ENCODE measurements at regions of chr6 and their contacts with region 1.

Region 1: GRCh38 chr6:41072676-41073623 is at the start of gene NFYA:
- DNase-seq: peak; percentile 99
- H3K4me3 ChIP-seq: peak within 1 kb of the TSS; percentile 88
- CTCF ChIP-seq: peak; percentile 36

Region 2: DNA sequence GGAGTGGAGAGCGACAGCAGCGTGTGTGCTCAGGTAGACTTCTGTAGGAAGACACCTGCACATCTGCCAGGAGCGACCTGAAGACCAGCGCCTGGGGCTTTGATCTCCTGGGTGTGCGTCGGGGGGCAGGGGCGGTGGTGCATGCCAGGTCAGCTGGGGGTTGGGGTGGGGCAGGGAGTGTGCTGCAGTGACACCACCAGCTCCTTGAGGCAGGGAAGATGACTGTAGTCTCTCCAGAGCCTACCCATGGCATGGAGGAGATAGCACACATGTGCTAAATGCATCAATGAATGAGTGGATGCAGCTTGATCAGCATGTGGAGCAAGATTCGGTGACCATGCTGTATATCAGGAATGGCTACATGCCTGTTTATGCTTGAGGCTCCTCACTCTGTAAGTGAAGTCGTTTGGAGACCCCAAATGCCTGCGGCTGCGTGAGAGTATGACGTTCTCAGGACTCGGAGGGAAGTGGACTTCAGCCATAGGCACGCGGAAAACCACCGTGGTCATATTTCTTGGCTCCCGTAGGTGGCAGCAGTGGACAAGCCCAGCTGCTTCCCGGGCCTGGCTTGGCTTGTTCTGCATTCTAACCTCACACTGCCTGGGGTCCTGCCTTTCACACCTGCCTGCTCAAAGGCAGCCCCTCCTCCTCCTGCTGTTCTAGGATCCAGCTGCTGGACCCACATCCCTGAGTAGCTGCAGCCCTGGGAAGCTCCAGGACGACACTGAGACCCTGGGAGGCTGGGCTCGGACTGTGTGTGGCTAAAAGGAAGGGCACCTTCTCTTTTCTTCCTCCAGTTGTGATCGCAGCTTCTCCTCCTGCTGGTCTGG is 1711.1 kb before region 1 on chr6:
- in situ Hi-C with region 1: loop called (anchors 25 kb)
- DNase-seq: peak; percentile 40
- H3K4me3 ChIP-seq: no peak overlapping the region
- CTCF ChIP-seq: peak; percentile 93

Region 3: DNA sequence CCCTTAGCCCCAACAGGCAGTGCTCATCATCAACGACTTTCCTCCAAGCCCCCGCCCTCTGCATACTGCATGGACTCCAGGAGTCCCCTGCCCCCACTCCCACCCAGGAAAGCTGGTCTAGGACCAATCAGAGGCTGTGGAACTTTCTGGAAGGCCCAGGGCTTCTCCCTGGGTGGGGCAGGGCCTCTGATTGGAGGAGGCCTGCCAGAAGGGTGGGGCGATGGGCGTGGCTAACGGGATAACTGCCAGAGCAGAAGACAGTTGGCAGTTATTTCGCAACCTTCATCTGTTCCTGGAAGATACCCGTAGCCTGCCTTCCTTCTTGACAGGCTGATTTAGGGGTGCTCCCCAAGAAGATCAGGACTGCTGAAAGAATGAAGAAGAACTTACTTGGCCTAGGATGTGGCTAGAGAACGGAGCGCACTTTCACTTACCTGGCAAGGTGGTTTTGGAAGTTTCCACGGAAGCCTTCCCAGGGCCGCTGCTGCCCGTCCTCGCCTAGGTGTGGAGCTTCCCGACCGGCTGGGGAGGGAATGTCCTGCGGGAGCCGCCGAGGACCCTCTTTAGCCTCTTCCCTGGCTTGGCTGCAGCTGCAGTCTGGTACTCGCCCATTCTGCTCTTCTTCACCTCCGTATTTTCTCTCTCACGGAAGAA is 694.8 kb before region 1 on chr6:
- in situ Hi-C with region 1: no loop called
- DNase-seq: no peak
- H3K4me3 ChIP-seq: no peak overlapping the region
- CTCF ChIP-seq: no peak